Endothelial cell of umbilical vein (primary cell): ENCODE measurements at regions of chr13 and their contacts with region 1.

Region 1: DNA sequence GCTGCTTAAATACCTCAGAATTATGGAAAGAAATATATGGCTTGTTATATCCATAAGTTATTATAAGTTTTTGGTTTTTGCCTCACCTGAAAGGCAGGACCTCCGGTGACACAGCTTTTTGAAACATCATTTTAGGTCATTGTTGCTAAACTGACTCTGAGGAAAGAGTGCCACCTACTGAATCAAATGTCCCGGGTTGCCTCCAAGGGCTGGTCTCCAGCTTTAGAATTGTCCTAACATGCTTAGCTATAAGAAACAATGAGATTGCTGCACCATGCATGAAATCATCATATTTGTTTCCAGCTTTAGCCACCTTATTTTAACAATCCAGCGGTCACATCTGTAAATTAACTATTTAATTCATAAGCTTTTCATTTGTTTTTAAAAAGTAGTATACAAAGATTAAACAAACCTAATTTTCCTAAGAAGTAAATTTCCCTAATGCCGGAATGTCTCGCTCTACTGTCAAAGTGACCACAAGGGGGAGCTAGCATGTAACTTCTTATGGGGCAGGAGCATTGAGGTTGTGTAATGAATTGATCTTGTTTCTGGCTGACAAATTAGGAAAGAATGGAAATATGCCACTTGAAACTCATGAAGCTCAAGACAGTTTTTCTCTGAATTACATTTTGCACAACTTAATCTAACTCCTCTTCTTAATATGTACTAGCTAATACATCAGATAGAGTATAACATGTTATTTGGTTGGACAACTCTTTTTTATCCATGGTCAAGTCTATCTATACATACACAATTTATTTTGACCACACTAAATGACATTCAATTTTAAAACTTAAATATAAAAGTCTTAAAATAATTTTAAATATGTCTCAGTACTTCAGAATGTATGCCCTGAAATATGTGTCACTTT is 6.7 kb upstream of the PCDH17 start:
- DNase-seq: peak; percentile 71
- H3K4me3 ChIP-seq: no peak overlapping the region
- H3K27ac ChIP-seq: no peak overlapping the region
- H3K4me1 ChIP-seq: peaks cover 4% of the 10 kb centered on the region
- H3K27me3 ChIP-seq: peaks cover 0 to 2% of the 10 kb centered on the region in 2 experiments
- CTCF ChIP-seq: peak; percentile 66 to 73
- POLR2A ChIP-seq: no peak

Region 2: GRCh38 chr13:56561327-56561726 is 1063.5 kb before region 1 on chr13:
- CTCF ChIA-PET with region 1: interaction called, 16 read pairs
- POLR2A ChIA-PET with region 1: no interaction called
- dilution Hi-C with region 1: no loop called
- intact Hi-C with region 1: no loop called
- DNase-seq: peak; percentile 35
- H3K4me3 ChIP-seq: no peak overlapping the region
- H3K27ac ChIP-seq: no peak overlapping the region
- H3K4me1 ChIP-seq: no peaks in the 10 kb centered on the region
- H3K27me3 ChIP-seq: no peaks in the 10 kb centered on the region
- CTCF ChIP-seq: peak; percentile 20 to 39
- POLR2A ChIP-seq: no peak

Region 3: DNA sequence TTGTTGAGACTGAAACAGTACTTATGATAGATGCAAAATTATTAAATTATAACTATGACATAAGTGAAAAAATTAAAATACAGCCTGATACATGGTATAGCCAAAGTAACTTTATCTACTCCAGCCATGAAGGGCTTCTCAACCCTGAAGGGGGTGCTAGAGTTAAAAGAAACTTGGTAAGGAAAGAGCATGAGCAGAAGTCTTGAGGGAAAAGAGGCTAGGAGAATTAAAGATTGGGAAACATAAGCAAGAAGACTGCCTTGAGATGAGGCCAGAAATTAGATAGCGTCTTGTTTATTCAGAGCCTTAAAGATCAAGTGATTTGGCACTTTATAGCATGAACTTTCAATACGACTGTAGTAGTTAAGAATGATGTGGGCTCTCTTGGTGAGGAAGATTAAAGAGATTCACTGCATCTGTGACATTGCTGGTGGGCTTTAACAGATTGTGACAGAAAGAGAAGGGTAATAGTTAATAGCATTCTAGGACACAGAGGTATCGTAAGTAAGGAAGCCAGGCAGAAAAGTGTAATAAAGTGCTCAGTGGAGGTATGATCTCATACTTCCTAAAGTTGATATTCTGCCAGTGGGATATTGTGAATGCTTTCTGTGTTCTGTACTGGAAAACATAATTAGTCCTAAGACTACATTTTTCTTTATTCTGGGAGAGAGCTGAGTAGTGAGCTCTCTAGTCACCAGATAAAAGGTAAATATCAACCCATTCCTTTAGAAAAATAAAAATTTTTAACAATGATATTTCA is 869.4 kb before region 1 on chr13:
- CTCF ChIA-PET with region 1: interaction called, 18 read pairs
- POLR2A ChIA-PET with region 1: no interaction called
- dilution Hi-C with region 1: no loop called
- intact Hi-C with region 1: loop called (anchors 1 kb)
- DNase-seq: peak; percentile 84
- H3K4me3 ChIP-seq: no peak overlapping the region
- H3K27ac ChIP-seq: peak overlapping the region; percentile 7
- H3K4me1 ChIP-seq: peaks cover 4% of the 10 kb centered on the region
- H3K27me3 ChIP-seq: no peaks in the 10 kb centered on the region
- CTCF ChIP-seq: peak; percentile 37 to 51
- POLR2A ChIP-seq: no peak

Region 4: GRCh38 chr13:57612568-57612967 is 12.2 kb before region 1 on chr13:
- CTCF ChIA-PET with region 1: interaction called, 40 read pairs
- POLR2A ChIA-PET with region 1: no interaction called
- dilution Hi-C with region 1: no loop called
- intact Hi-C with region 1: no loop called
- DNase-seq: no peak
- H3K4me3 ChIP-seq: no peak overlapping the region
- H3K27ac ChIP-seq: no peak overlapping the region
- H3K4me1 ChIP-seq: no peaks in the 10 kb centered on the region
- H3K27me3 ChIP-seq: no peaks in the 10 kb centered on the region
- CTCF ChIP-seq: no peak
- POLR2A ChIP-seq: no peak

Region 5: DNA sequence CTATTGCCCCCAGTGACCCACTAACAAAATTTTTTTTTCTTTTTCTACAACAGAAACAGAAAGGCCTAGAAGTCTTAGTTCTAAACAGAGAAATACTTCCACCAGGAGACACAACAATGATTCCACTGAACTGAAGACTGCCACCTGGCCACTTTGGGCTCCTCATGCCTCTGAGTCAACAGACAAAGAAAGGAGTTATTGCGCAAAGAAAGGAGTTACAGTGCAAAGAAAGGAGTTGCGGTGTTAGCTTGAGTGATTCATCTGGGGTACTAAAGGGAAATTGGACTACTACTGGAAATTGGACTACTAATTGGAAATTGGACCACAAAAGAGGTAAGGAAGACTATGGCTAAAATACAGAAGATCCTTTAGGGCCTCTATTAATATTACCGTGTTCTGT is 123.3 kb after region 1 on chr13:
- CTCF ChIA-PET with region 1: no interaction called
- POLR2A ChIA-PET with region 1: no interaction called
- dilution Hi-C with region 1: no loop called
- intact Hi-C with region 1: no loop called
- DNase-seq: no peak
- H3K4me3 ChIP-seq: no peak overlapping the region
- H3K27ac ChIP-seq: no peak overlapping the region
- H3K4me1 ChIP-seq: no peaks in the 10 kb centered on the region
- H3K27me3 ChIP-seq: no peaks in the 10 kb centered on the region
- CTCF ChIP-seq: no peak
- POLR2A ChIP-seq: no peak

Region 6: DNA sequence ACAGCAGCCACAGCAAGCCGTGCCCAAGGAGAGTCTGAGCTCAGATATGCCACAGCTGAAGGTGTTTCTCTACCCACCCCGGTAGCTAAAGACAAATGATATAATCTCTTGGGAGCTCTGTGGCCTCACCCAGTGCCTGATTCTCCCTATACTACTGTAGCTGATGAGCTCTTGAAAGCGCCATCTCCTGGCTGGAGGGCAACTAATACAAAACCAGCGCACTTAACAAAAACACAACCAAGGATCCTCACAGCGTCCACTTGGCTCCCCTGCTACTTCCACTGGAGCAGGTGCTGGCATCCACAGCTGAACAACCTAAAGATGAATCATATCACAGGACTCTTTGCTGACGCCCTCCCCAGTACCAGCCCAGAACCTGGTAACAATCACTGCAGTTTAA is 1218.8 kb after region 1 on chr13:
- CTCF ChIA-PET with region 1: no interaction called
- POLR2A ChIA-PET with region 1: no interaction called
- dilution Hi-C with region 1: no loop called
- intact Hi-C with region 1: loop called (anchors 5 kb)
- DNase-seq: no peak
- H3K4me3 ChIP-seq: no peak overlapping the region
- H3K27ac ChIP-seq: no peak overlapping the region
- H3K4me1 ChIP-seq: no peaks in the 10 kb centered on the region
- H3K27me3 ChIP-seq: no peaks in the 10 kb centered on the region
- CTCF ChIP-seq: no peak
- POLR2A ChIP-seq: no peak

Region 7: GRCh38 chr13:58960888-58961287 is 1336.1 kb after region 1 on chr13:
- CTCF ChIA-PET with region 1: interaction called, 30 read pairs
- POLR2A ChIA-PET with region 1: no interaction called
- dilution Hi-C with region 1: no loop called
- intact Hi-C with region 1: loop called (anchors 1 kb)
- DNase-seq: peak; percentile 33
- H3K4me3 ChIP-seq: no peak overlapping the region
- H3K27ac ChIP-seq: no peak overlapping the region
- H3K4me1 ChIP-seq: no peaks in the 10 kb centered on the region
- H3K27me3 ChIP-seq: no peaks in the 10 kb centered on the region
- CTCF ChIP-seq: peak in 1 of 2 donors; percentile 8
- POLR2A ChIP-seq: no peak

Region 8: DNA sequence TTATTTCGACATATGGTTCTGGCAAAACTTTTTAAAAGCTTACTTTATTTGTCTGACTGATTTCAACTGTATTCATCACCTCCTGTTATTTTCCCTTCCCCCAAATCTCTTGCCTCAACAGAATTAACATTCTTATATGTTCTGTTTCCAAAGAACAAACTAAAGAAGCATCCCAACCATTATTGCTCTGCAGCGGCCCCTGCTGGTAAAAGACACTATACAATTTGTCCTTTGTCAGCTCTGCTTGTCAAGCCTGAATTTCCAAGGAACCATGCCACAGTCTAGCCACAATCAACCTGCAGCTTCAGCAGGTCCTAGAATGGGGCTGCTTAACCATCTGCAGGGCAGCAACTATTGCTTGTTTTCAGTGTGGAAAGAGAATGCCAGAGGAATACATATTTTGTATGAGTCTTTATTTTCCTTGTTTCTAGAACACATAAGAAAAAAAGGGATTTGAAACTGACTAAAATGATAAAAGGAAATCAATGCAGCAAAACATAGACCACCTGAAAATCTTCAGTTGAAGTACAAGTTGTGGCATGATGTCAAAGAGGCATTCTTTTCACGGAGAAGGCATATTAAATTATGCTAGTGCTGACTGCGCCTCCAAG is 1693.6 kb after region 1 on chr13:
- CTCF ChIA-PET with region 1: interaction called, 32 read pairs
- POLR2A ChIA-PET with region 1: no interaction called
- dilution Hi-C with region 1: no loop called
- intact Hi-C with region 1: no loop called
- DNase-seq: peak; percentile 86
- H3K4me3 ChIP-seq: no peak overlapping the region
- H3K27ac ChIP-seq: no peak overlapping the region
- H3K4me1 ChIP-seq: peaks cover 23% of the 10 kb centered on the region
- H3K27me3 ChIP-seq: no peaks in the 10 kb centered on the region
- CTCF ChIP-seq: peak; percentile 68 to 71
- POLR2A ChIP-seq: no peak